Caco-2 (cell line): ENCODE measurements at regions of chr1 and their contacts with region 1.

Region 1: DNA sequence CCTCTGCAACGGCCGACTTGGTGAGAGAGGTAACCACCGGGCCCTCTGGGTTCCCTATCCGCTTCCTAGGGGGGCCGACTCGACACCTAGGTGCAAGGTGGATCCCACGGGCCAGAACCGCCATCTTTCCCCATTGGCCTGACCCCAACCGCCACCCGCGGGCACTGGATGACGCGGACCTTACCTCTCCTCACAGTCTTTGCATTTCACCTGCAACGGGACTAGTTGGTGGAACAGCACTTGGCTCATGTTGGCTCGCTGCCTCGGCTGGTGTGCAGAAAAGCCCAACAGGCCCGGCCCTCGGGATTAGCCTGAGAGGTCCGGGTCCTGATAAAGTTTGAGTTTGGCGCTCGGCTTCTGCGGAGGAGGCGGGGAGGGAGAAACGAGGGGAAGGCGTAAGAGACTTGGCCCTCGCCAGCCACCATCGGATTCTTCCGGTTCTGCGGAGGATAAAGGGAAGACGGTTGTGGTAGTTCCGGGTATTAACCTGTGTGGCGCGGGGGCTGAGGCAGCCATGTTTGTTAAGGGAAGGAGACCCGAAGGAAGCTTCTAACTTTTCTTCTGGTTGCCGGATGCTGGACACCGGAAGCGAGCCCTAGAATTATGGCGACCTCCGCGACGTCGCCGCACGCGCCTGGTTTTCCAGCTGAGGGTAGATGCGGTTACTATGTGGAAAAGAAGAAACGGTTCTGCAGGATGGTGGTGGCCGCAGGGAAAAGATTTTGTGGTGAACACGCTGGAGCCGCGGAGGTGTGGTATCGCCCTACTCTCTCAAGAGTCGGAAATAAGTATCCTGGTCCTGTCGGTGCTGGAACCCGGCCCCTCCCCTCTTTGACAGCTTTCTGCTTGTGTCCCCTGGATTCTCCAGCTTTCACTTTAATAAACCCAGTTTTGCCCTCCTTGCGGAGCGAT is at the starts of genes SASS6 and TRMT13:
- DNase-seq: peak; percentile 91 to 95
- H3K4me3 ChIP-seq: peak within 1 kb of the TSS; percentile 50
- H3K4me3 Mint-ChIP-seq: peak within 1 kb of the TSS; percentile 98
- H3K27ac Mint-ChIP-seq: peak within 1 kb of the TSS; percentile 99
- H3K4me1 ChIP-seq: no peaks in the 10 kb centered on the region
- H3K4me1 Mint-ChIP-seq: no peaks in the 10 kb centered on the region
- H3K27me3 ChIP-seq: no peaks in the 10 kb centered on the region
- H3K27me3 Mint-ChIP-seq: no peaks in the 10 kb centered on the region
- CTCF ChIP-seq: no peak
- total RNA-seq, gene SASS6: 9.5 and 10.1 TPM in 2 replicates
- total RNA-seq, gene TRMT13: 12.6 and 14.5 TPM in 2 replicates

Region 2: DNA sequence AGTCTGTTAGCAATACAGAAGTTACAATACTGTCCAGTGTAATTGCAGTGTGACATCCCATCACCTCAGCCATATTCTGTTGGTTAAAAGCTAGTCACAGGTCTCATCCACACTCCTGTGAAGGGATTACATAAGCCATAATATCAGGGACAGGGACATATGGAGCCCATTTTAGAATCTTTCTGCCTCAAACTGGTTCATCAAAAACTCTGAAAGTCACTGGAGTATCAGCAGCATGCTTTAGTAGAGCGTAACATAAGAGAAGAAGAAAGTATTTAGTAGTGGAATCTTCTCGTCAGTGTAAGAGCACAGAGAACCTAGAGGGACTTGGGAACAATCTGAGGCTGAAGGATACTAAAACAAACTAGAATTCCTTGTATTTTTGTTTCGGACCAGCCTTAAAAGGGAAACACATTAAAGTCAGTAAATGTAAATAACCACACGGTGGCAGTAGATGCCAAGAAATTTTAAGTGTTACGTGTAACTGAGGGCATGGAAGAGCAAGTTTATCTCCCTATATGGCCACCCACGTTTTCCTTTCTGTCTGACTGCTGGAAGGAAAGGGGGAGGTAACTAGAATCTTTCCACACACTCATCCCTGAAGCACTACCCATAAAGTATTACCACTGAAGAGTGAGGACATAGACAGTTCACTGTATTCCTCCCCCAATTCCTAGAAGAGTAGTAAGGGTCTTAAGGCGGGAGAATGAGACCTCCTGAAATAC is 324.3 kb before region 1 on chr1:
- CTCF ChIA-PET with region 1: no interaction called
- POLR2A ChIA-PET with region 1: no interaction called
- intact Hi-C with region 1: loop called (anchors 10 kb)
- DNase-seq: peak; percentile 49 to 58
- H3K4me3 ChIP-seq: no peak overlapping the region
- H3K4me3 Mint-ChIP-seq: no peak overlapping the region
- H3K27ac Mint-ChIP-seq: no peak overlapping the region
- H3K4me1 ChIP-seq: 0 out of 2 replicates have a peak, but pooled peaks cover 3% of the 10 kb centered on the region
- H3K4me1 Mint-ChIP-seq: no peaks in the 10 kb centered on the region
- H3K27me3 ChIP-seq: no peaks in the 10 kb centered on the region
- H3K27me3 Mint-ChIP-seq: no peaks in the 10 kb centered on the region
- CTCF ChIP-seq: peak in 1 of 2 experiments; percentile 3

Region 3: DNA sequence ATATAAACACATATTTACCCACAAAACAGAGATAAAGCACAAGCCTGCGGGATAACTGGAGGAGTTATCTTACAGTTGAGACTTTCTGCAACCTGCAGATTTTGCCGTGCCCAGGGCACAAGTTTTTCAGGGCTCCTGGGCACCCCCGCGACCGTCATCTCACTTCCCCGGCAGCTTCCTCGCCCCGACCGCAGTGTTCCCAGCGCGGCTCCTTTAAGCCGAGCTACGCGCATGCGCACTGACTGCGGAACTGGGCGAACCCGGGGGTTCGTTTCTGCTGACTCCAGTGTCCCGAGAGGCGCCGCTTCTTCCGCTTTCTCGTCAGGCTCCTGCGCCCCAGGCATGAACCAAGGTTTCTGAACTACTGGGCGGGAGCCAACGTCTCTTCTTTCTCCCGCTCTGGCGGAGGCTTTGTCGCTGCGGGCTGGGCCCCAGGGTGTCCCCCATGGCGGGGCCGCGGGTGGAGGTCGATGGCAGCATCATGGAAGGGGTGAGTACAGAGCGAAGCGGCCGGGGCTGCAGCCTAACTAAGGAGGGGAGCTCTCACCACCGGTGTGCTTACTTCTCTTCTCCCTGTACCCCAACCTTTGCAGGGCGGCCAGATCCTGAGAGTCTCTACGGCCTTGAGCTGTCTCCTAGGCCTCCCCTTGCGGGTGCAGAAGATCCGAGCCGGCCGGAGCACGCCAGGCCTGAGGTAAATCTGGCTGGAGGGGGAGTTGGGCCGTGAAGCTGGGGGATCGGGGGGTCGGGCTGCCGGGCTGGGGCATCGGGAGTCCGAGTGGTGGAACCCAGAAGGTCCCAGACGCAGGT is 133.3 kb after region 1 on chr1 and contains the start of gene RTCA:
- CTCF ChIA-PET with region 1: no interaction called
- POLR2A ChIA-PET with region 1: interaction called, 8 read pairs
- intact Hi-C with region 1: loop called (anchors 5 kb)
- DNase-seq: peak; percentile 88 to 89
- H3K4me3 ChIP-seq: peak within 1 kb of the TSS; percentile 79
- H3K4me3 Mint-ChIP-seq: peak within 1 kb of the TSS; percentile 95
- H3K27ac Mint-ChIP-seq: peak within 1 kb of the TSS; percentile 96
- H3K4me1 ChIP-seq: peaks cover 4% of the 10 kb centered on the region
- H3K4me1 Mint-ChIP-seq: no peaks in the 10 kb centered on the region
- H3K27me3 ChIP-seq: no peaks in the 10 kb centered on the region
- H3K27me3 Mint-ChIP-seq: no peaks in the 10 kb centered on the region
- CTCF ChIP-seq: no peak
- total RNA-seq, gene RTCA: 27.4 and 31.4 TPM in 2 replicates